PC-3 (cell line): ENCODE measurements at regions of chr14 and their contacts with region 1.

Region 1: GRCh38 chr14:74905375-74906142 is 17.5 kb downstream of the RPS6KL1 start:
- DNase-seq: peak; percentile 68
- ATAC-seq: peak; percentile 68
- H3K4me3 ChIP-seq: no peak overlapping the region
- H3K27ac ChIP-seq: no peak overlapping the region
- H3K4me1 ChIP-seq: no peaks in the 10 kb centered on the region
- H3K27me3 ChIP-seq: no peaks in the 10 kb centered on the region
- CTCF ChIP-seq: peak; percentile 98

Region 2: GRCh38 chr14:74860906-74861733 is 44.4 kb before region 1 on chr14:
- CTCF ChIA-PET with region 1: interaction called, 56 read pairs
- POLR2A ChIA-PET with region 1: interaction called, 4 read pairs
- intact Hi-C with region 1: loop called (anchors 1 kb)
- DNase-seq: peak; percentile 92
- ATAC-seq: peak; percentile 80
- H3K4me3 ChIP-seq: no peak overlapping the region
- H3K27ac ChIP-seq: no peak overlapping the region
- H3K4me1 ChIP-seq: no peaks in the 10 kb centered on the region
- H3K27me3 ChIP-seq: no peaks in the 10 kb centered on the region
- CTCF ChIP-seq: peak; percentile 90

Region 3: DNA sequence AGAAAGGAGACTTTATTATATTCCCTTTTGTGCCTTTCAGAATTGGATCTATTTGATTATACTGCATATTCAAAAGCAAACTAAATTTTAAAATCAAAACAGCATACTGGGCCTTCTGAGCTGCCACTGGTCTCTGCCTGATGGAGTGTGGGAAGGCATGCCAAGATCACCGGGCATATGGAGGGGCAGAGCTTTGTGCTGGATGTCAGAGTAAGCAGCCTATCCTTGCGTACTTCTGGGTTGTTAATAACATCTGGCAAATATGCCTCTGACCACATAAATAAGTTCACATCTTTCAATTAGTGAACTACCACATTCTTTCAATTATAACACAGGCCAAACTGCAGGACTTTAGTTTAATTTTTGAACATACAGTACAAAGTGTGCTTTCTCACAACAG is 127.4 kb after region 1 on chr14:
- CTCF ChIA-PET with region 1: no interaction called
- POLR2A ChIA-PET with region 1: no interaction called
- intact Hi-C with region 1: no loop called
- DNase-seq: no peak
- ATAC-seq: no peak
- H3K4me3 ChIP-seq: no peak overlapping the region
- H3K27ac ChIP-seq: no peak overlapping the region
- H3K4me1 ChIP-seq: no peaks in the 10 kb centered on the region
- H3K27me3 ChIP-seq: no peaks in the 10 kb centered on the region
- CTCF ChIP-seq: no peak